ENCODE measurements at regions of chr7 and their contacts with region 1.

Region 1: DNA sequence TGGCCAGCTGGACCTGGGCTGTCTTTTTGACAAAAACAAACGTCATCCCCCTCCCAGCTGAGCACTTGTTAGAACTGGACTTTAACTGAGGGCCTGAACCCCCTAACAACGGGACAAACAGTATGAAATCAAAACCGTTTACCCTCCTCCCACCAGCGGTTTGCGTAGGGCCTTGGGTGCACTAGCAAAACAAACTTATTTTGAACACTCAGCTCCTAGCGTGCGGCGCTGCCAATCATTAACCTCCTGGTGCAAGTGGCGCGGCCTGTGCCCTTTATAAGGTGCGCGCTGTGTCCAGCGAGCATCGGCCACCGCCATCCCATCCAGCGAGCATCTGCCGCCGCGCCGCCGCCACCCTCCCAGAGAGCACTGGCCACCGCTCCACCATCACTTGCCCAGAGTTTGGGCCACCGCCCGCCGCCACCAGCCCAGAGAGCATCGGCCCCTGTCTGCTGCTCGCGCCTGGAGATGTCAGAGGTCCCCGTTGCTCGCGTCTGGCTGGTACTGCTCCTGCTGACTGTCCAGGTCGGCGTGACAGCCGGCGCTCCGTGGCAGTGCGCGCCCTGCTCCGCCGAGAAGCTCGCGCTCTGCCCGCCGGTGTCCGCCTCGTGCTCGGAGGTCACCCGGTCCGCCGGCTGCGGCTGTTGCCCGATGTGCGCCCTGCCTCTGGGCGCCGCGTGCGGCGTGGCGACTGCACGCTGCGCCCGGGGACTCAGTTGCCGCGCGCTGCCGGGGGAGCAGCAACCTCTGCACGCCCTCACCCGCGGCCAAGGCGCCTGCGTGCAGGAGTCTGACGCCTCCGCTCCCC is at the start of gene IGFBP1:
- DNase-seq: peak; percentile 79 to 95 (median 81)
- ATAC-seq: peak; percentile 14 to 69 (median 32)
- H3K4me3 ChIP-seq: peak within 1 kb of the TSS; percentile 48 to 64 (median 64)
- H3K27ac ChIP-seq: peak within 1 kb of the TSS; percentile 93 to 98 (median 98)
- H3K4me1 ChIP-seq: peaks cover 0 to 42% (median 14%) of the 10 kb centered on the region in 4 donors
- H3K27me3 ChIP-seq: no peaks in the 10 kb centered on the region
- CTCF ChIP-seq: no peak
- POLR2A ChIP-seq: peak; percentile 98
- total RNA-seq, gene IGFBP1: 7.7 to 566 (median 283) TPM

Region 2: DNA sequence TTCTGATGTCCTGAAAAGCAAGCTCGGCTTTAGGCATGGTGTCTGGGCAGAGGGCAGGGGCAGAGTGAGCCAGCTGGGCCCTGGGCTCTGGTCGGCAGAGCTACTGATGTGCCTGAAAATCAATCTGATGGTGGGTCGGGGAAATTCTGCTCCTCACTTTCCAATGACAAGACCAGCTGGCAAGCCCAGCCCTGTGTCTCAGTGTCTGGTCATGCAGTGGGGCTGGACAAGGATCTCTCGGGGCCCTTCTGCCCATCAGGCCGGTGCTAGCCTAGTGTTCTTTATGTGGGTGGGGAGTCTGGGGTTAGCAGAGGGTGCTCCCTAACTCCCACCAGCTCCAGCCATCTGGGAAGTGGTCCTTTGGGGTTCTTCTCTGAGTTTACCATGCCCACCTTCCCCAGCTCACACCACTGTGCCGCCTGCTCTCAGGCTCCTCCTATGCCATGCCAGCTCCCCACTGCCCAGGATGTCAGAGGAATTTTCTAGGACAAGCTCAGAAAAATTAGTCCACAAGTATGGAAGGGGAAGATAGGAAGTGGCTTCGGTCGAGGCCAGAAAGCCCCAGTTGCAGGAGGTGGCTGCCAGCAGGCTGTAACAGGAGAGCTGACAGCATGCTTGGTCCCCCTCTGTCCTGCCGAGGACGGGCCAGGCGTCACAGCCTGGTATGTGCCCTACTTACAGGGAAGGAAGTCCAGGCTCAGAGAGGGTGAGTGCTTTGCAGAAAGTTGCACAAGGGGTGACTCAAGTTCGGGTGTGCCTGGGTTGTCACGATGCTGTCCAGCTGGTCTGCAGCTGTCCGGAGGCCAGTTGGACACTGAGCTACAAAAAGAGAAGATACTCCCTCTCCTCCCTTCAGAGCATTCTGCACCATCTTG is 179.0 kb before region 1 on chr7:
- intact Hi-C with region 1: loop called in 1 of 2 experiments (anchors 10 kb)
- DNase-seq: peak in 1 of 3 donors; percentile 43
- ATAC-seq: peak; percentile 6 to 50 (median 32)
- H3K4me3 ChIP-seq: no peak overlapping the region
- H3K27ac ChIP-seq: no peak overlapping the region
- H3K4me1 ChIP-seq: no peaks in the 10 kb centered on the region
- H3K27me3 ChIP-seq: no peaks in the 10 kb centered on the region
- CTCF ChIP-seq: no peak
- POLR2A ChIP-seq: no peak

Measured in right lobe of liver (tissue), 6 donors.